ENCODE measurements at regions of chr9 and their contacts with region 1.

Region 1: DNA sequence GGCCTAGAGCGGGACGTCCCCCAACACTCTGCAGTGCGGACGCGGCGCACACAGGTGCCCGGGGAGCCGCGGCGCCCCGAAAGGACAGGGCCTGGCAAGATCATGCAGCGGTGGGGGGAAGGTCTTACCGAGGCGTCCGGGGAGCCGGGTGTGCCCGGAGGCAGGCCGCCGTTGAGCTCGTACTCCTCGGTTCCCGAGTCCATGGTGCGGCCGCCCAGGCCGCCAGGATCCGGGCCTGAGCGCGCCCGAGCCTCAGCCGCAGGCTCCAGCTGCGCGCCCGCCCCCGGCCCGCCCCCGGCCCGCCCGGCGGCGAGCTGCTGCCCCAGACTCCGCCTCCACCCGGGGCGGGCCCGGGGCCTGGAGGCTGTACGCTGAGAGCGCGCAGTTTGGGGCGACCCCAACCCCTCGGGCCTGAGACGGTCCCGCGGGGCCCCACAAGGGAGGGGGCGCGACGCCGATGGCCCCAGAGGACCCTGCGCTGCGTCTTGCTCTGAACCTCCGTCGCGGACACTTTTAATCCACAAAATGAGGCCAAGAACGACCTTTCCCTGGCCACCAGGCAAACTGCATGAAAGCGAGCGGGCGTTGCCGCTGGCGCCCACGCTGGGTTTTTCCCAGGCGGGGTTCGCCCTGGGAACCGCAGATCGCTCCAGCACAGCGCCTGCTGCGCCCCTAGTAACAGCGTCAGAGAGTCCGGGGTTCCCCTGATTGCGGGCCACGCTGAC is at the start of gene NINJ1:
- H3K4me3 Mint-ChIP-seq: peak within 1 kb of the TSS; percentile 95
- H3K27ac Mint-ChIP-seq: peak within 1 kb of the TSS; percentile 96
- H3K4me1 Mint-ChIP-seq: peaks cover 90% of the 10 kb centered on the region
- H3K27me3 Mint-ChIP-seq: peaks cover 12% of the 10 kb centered on the region

Region 2: GRCh38 chr9:93119953-93120845 is 14.0 kb before region 1 on chr9:
- intact Hi-C with region 1: loop called (anchors 1 kb)
- H3K4me3 Mint-ChIP-seq: peak overlapping the region; percentile 32
- H3K27ac Mint-ChIP-seq: peak overlapping the region; percentile 89
- H3K4me1 Mint-ChIP-seq: peaks cover 86% of the 10 kb centered on the region
- H3K27me3 Mint-ChIP-seq: no peaks in the 10 kb centered on the region

Region 3: DNA sequence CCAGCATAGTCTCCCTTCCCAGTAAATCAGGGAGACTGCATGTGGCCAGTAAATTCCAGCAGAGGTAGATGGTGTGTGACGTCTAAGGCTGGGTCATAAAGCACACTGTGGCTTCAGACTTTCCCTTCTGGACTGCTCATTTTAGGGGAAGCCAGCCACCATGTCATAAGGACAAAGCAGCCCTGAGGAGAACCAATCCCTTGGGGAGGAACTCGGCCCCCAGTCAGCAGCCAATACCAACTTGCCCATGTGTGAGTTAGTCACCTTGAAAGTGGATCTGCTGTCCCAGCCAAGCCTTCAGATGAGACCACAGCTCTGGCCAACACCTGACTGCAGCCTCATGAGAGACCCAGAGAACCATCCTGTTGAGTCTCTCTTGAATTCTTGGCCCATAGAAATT is 14.5 kb after region 1 on chr9:
- intact Hi-C with region 1: loop called (anchors 1 kb)
- H3K4me3 Mint-ChIP-seq: no peak overlapping the region
- H3K27ac Mint-ChIP-seq: peak overlapping the region; percentile 81
- H3K4me1 Mint-ChIP-seq: peaks cover 41% of the 10 kb centered on the region
- H3K27me3 Mint-ChIP-seq: peaks cover 7% of the 10 kb centered on the region